Mammary epithelial cell (primary cell): ENCODE measurements at regions of chr19 and their contacts with region 1.

Region 1: GRCh38 chr19:8363803-8364771 is at the start of gene ANGPTL4:
- DNase-seq: peak; percentile 64
- H3K4me3 ChIP-seq: peak within 1 kb of the TSS; percentile 61 to 83 (median 71)
- H3K27ac ChIP-seq: peak within 1 kb of the TSS; percentile 70
- H3K4me1 ChIP-seq: peaks cover 41% of the 10 kb centered on the region
- H3K27me3 ChIP-seq: no peaks in the 10 kb centered on the region
- CTCF ChIP-seq: no peak
- total RNA-seq, gene ANGPTL4: 75.8 to 294 TPM

Region 2: GRCh38 chr19:6540918-6541689 is 1823.0 kb before region 1 on chr19:
- CTCF ChIA-PET with region 1: no interaction called
- dilution Hi-C with region 1: no loop called
- in situ Hi-C with region 1: no loop called
- intact Hi-C with region 1: no loop called
- DNase-seq: peak; percentile 57
- H3K4me3 ChIP-seq: no peak overlapping the region
- H3K27ac ChIP-seq: no peak overlapping the region
- H3K4me1 ChIP-seq: peaks cover 25% of the 10 kb centered on the region
- H3K27me3 ChIP-seq: no peaks in the 10 kb centered on the region
- CTCF ChIP-seq: no peak

Region 3: GRCh38 chr19:8389891-8390616 is 26.0 kb after region 1 on chr19 and contains the start of gene RAB11B:
- CTCF ChIA-PET with region 1: no interaction called
- dilution Hi-C with region 1: no loop called
- in situ Hi-C with region 1: loop called in 1 of 2 experiments (anchors 5 kb)
- intact Hi-C with region 1: loop called (anchors 1 kb)
- DNase-seq: peak; percentile 100
- H3K4me3 ChIP-seq: peak within 1 kb of the TSS; percentile 69 to 87 (median 80)
- H3K27ac ChIP-seq: peak within 1 kb of the TSS; percentile 93
- H3K4me1 ChIP-seq: peaks cover 25% of the 10 kb centered on the region
- H3K27me3 ChIP-seq: no peaks in the 10 kb centered on the region
- CTCF ChIP-seq: no peak
- total RNA-seq, gene RAB11B: 24.0 to 88.3 TPM

Region 4: DNA sequence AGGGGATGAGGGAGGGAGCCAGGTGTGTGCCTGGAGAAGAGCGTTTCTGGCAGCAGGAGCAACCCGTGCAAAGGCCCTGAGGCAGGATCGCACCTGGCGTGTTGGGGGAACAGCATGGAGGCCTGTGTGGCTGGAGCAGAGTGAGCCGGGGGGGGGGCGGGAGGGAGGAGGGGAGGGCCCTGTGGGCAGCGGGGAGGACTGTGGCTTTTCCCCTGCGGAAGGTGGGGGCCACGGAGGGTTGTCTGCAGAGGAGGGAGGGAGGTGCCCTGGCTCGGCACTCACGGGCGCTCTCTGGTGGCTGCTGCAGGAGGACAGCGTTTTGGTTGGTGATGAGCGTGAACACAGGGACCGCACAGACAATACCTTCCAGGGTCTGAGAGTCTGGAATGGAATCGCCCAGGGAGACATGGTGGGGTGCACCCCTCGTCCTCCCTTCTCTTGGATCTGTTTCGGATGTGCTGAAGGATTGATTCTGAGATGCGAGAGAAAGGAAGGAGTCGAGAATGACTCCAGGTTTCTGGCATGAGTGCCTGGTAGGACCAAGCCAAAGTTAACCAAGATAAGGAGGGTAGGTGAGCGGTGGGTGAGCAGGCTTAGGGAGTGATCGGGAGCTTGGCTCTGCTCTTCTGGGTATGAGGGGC is 32.6 kb after region 1 on chr19:
- CTCF ChIA-PET with region 1: no interaction called
- dilution Hi-C with region 1: no loop called
- in situ Hi-C with region 1: loop called (anchors 5 to 10 kb)
- intact Hi-C with region 1: no loop called
- DNase-seq: peak; percentile 55
- H3K4me3 ChIP-seq: no peak overlapping the region
- H3K27ac ChIP-seq: peak overlapping the region; percentile 42
- H3K4me1 ChIP-seq: peaks cover 45% of the 10 kb centered on the region
- H3K27me3 ChIP-seq: no peaks in the 10 kb centered on the region
- CTCF ChIP-seq: peak; percentile 73 to 85